ENCODE measurements at regions of chrX and their contacts with region 1.

Region 1: GRCh38 chrX:106894392-106894909 is 8.7 kb downstream of the RIPPLY1 start:
- DNase-seq: peak; percentile 78
- H3K4me3 ChIP-seq: no peak overlapping the region
- H3K27ac ChIP-seq: no peak overlapping the region
- H3K4me1 ChIP-seq: no peaks in the 10 kb centered on the region
- H3K27me3 ChIP-seq: peaks cover 8% of the 10 kb centered on the region
- CTCF ChIP-seq: peak; percentile 87

Region 2: GRCh38 chrX:106952988-106953387 is 58.5 kb after region 1 on chrX:
- CTCF ChIA-PET with region 1: no interaction called
- POLR2A ChIA-PET with region 1: no interaction called
- intact Hi-C with region 1: loop called (anchors 2 kb)
- DNase-seq: peak; percentile 40
- H3K4me3 ChIP-seq: no peak overlapping the region
- H3K27ac ChIP-seq: no peak overlapping the region
- H3K4me1 ChIP-seq: no peaks in the 10 kb centered on the region
- H3K27me3 ChIP-seq: no peaks in the 10 kb centered on the region
- CTCF ChIP-seq: peak; percentile 64

Region 3: DNA sequence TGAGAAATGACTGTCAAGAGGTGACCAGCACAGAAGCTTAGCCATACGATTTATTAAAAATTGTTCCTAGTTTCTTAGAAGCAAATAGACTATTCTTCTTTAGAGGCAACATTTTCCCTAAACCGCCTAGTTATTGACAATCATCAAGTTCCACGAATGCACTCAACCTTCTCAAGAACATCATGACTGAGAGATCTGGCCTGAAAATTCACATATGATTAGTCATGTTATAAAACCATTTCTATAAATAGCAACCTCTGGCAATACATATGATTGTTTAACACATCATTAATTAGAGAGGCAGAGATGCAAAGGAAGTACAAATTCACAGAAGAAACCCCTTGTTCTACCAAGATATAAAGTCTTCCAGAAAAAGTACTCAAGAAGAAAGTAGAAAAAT is 305.0 kb after region 1 on chrX:
- CTCF ChIA-PET with region 1: interaction called, 14 read pairs
- POLR2A ChIA-PET with region 1: no interaction called
- intact Hi-C with region 1: no loop called
- DNase-seq: no peak
- H3K4me3 ChIP-seq: no peak overlapping the region
- H3K27ac ChIP-seq: no peak overlapping the region
- H3K4me1 ChIP-seq: no peaks in the 10 kb centered on the region
- H3K27me3 ChIP-seq: no peaks in the 10 kb centered on the region
- CTCF ChIP-seq: no peak

Region 4: GRCh38 chrX:107448998-107449835 is 554.8 kb after region 1 on chrX and contains the start of gene FRMPD3:
- CTCF ChIA-PET with region 1: no interaction called
- POLR2A ChIA-PET with region 1: no interaction called
- intact Hi-C with region 1: loop called (anchors 10 kb)
- DNase-seq: no peak
- H3K4me3 ChIP-seq: peak within 1 kb of the TSS; percentile 45
- H3K27ac ChIP-seq: no peak within 1 kb of the TSS
- H3K4me1 ChIP-seq: no peaks in the 10 kb centered on the region
- H3K27me3 ChIP-seq: peaks cover 19% of the 10 kb centered on the region
- CTCF ChIP-seq: no peak
- total RNA-seq, gene FRMPD3: 0.09 and 0.15 TPM in 2 replicates

Region 5: DNA sequence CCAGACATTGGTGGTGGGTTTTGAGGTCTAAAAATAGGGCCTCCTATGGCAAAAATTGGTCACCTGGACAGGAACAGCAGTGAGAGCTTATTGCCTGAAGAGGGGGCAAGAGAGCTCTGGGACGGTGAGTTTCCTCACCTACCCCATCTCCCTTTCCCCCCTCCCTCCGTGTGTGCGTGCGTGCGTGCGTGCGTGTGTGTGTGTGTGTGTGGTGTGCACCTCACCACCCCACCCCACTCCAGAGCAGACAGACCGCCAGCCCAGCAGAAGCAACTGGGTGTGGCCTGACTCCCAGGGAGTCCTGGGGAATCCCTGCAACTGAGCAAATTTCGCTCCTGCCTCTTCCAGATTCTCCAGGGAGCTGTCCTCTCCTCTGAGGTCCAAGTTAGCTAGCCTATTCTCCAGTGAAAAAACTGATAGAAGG is 778.5 kb after region 1 on chrX:
- CTCF ChIA-PET with region 1: interaction called, 14 read pairs
- POLR2A ChIA-PET with region 1: no interaction called
- intact Hi-C with region 1: no loop called
- DNase-seq: peak; percentile 63
- H3K4me3 ChIP-seq: no peak overlapping the region
- H3K27ac ChIP-seq: no peak overlapping the region
- H3K4me1 ChIP-seq: peaks cover 26% of the 10 kb centered on the region
- H3K27me3 ChIP-seq: peaks cover 6% of the 10 kb centered on the region
- CTCF ChIP-seq: peak; percentile 70